ENCODE measurements at regions of chr16 and their contacts with region 1.

Region 1: GRCh38 chr16:27945233-27945973 is 118.1 kb downstream of the GSG1L start:
- DNase-seq: no peak
- ATAC-seq: no peak
- H3K4me3 ChIP-seq: no peak overlapping the region
- H3K4me3 Mint-ChIP-seq: no peak overlapping the region
- H3K27ac ChIP-seq: no peak overlapping the region
- H3K27ac Mint-ChIP-seq: no peak overlapping the region
- H3K4me1 ChIP-seq: no peaks in the 10 kb centered on the region
- H3K4me1 Mint-ChIP-seq: no peaks in the 10 kb centered on the region
- H3K27me3 ChIP-seq: peaks cover 5 to 15% of the 10 kb centered on the region in 2 experiments
- H3K27me3 Mint-ChIP-seq: peaks cover 10 to 20% of the 10 kb centered on the region in 2 donors

Region 2: GRCh38 chr16:27154705-27155521 is 790.5 kb before region 1 on chr16:
- CTCF ChIA-PET with region 1: no interaction called
- POLR2A ChIA-PET with region 1: interaction called in 1 of 2 experiments, 12 read pairs
- DNase-seq: peak in 34 of 35 experiments; percentile 24 to 81 (median 58)
- ATAC-seq: peak; percentile 68 to 77 (median 74)
- H3K4me3 ChIP-seq: no peak overlapping the region
- H3K4me3 Mint-ChIP-seq: no peak overlapping the region
- H3K27ac ChIP-seq: no peak overlapping the region
- H3K27ac Mint-ChIP-seq: peak overlapping the region in 1 of 2 donors; percentile 39
- H3K4me1 ChIP-seq: peaks cover 8 to 10% of the 10 kb centered on the region in 2 experiments
- H3K4me1 Mint-ChIP-seq: peaks cover 12 to 18% (median 13%) of the 10 kb centered on the region in 3 donors
- H3K27me3 ChIP-seq: no peaks in the 10 kb centered on the region
- H3K27me3 Mint-ChIP-seq: no peaks in the 10 kb centered on the region

Measured in T-cell (primary cell).